A673 (cell line): ENCODE measurements at regions of chr14 and their contacts with region 1.

Region 1: GRCh38 chr14:53055003-53055402 is 98.1 kb downstream of the DDHD1 start:
- DNase-seq: peak; percentile 63
- H3K4me3 ChIP-seq: no peak overlapping the region
- H3K27ac ChIP-seq: no peak overlapping the region
- H3K4me1 ChIP-seq: no peaks in the 10 kb centered on the region
- H3K27me3 ChIP-seq: no peaks in the 10 kb centered on the region
- CTCF ChIP-seq: peak; percentile 83

Region 2: GRCh38 chr14:52299692-52300278 is 755.2 kb before region 1 on chr14:
- CTCF ChIA-PET with region 1: no interaction called
- POLR2A ChIA-PET with region 1: no interaction called
- intact Hi-C with region 1: loop called (anchors 10 kb)
- DNase-seq: peak; percentile 64
- H3K4me3 ChIP-seq: no peak overlapping the region
- H3K27ac ChIP-seq: no peak overlapping the region
- H3K4me1 ChIP-seq: no peaks in the 10 kb centered on the region
- H3K27me3 ChIP-seq: peaks cover 7% of the 10 kb centered on the region
- CTCF ChIP-seq: peak; percentile 76

Region 3: GRCh38 chr14:52552063-52552988 is 502.7 kb before region 1 on chr14 and contains the starts of genes GPR137C and TXNDC16:
- CTCF ChIA-PET with region 1: no interaction called
- POLR2A ChIA-PET with region 1: no interaction called
- intact Hi-C with region 1: no loop called
- DNase-seq: peak; percentile 100
- H3K4me3 ChIP-seq: peak within 1 kb of the TSS; percentile 81
- H3K27ac ChIP-seq: peak within 1 kb of the TSS; percentile 56
- H3K4me1 ChIP-seq: peaks cover 17% of the 10 kb centered on the region
- H3K27me3 ChIP-seq: no peaks in the 10 kb centered on the region
- CTCF ChIP-seq: no peak
- total RNA-seq, gene GPR137C: 2.4 and 2.8 TPM in 2 replicates
- total RNA-seq, gene TXNDC16: 3.4 and 4.8 TPM in 2 replicates

Region 4: DNA sequence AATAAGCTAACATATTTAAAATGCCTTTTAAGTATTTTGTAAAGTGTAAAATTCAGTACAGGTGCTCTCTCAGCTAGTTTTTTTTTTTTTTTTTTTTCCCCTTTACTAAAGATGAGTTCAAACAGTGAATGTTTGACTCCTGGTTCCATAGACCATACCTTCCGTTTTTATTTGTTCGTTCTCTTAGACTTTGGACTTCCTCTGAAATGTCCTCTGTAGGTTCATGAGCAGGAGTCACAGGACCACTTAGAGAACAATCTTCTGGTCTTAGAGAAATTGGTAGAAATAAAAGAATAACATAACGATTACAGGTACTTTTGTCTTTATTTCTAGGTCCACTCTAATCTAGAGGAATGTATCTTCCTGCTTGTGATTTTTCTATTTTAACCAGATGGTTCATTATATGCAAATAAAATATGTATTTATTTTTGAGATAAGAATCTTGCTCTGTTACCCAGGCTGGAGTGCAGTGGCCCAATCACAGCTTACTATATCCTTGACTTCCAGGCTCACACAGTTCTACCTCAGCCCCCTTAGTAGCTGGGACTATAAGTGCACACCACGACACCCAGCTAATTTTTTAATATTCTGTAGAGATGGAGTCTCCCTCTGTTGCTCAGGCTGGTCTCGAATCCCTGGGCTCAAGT is 299.3 kb before region 1 on chr14:
- CTCF ChIA-PET with region 1: no interaction called
- POLR2A ChIA-PET with region 1: no interaction called
- intact Hi-C with region 1: no loop called
- DNase-seq: no peak
- H3K4me3 ChIP-seq: no peak overlapping the region
- H3K27ac ChIP-seq: no peak overlapping the region
- H3K4me1 ChIP-seq: no peaks in the 10 kb centered on the region
- H3K27me3 ChIP-seq: no peaks in the 10 kb centered on the region
- CTCF ChIP-seq: no peak

Region 5: GRCh38 chr14:52961060-52961639 is 93.9 kb before region 1 on chr14:
- CTCF ChIA-PET with region 1: interaction called, 3 read pairs
- POLR2A ChIA-PET with region 1: no interaction called
- intact Hi-C with region 1: loop called (anchors 5 kb)
- DNase-seq: peak; percentile 79
- H3K4me3 ChIP-seq: no peak overlapping the region
- H3K27ac ChIP-seq: no peak overlapping the region
- H3K4me1 ChIP-seq: no peaks in the 10 kb centered on the region
- H3K27me3 ChIP-seq: no peaks in the 10 kb centered on the region
- CTCF ChIP-seq: peak; percentile 79